PC-9 (cell line): ENCODE measurements at regions of chr10 and their contacts with region 1.

Region 1: DNA sequence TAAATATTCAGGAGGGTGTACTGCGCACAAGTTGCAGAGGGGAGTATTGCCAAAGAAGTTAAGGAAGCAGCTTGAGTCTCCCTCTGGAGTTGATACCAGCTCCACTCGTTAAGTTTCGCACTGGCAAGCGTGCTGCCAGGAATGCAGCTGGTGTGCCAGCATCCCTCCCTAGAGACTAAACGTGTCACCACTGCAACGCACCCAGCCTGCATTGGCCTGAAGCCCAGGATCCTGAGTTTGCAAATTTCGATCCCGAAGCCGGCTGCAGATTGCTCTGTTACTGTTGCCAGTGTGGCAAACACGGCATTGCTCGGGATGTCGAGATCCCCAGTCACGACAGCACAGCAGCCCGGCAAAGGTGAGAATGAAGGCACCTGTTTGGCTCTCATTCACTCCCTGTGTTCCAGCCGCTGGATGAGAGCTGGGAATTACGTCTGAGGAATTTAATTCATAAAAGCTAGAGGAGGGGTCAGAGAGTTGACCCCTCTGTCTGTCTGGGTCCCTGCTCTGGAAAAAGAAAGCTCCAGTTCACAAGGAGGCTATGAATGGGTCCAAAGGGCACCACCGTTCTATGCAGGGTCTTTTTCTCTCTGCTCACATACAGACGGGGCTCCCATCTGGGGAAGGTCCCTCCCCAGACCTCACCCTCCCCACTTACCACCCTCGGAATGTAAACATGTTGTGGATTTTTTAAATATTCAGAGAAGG is 61.0 kb downstream of the NRP1 start:
- DNase-seq: peak; percentile 94 to 95
- H3K4me3 ChIP-seq: peak overlapping the region; percentile 45; the same call in 1 of the 2 replicates
- H3K27ac ChIP-seq: peak overlapping the region; percentile 98
- H3K4me1 ChIP-seq: peaks cover 32% of the 10 kb centered on the region
- H3K27me3 ChIP-seq: no peaks in the 10 kb centered on the region
- CTCF ChIP-seq: no peak

Region 2: GRCh38 chr10:33134011-33134751 is 139.3 kb before region 1 on chr10:
- CTCF ChIA-PET with region 1: no interaction called
- POLR2A ChIA-PET with region 1: no interaction called
- intact Hi-C with region 1: loop called (anchors 10 kb)
- DNase-seq: peak; percentile 80 to 97
- H3K4me3 ChIP-seq: no peak overlapping the region
- H3K27ac ChIP-seq: peak overlapping the region; percentile 95
- H3K4me1 ChIP-seq: peaks cover 42% of the 10 kb centered on the region
- H3K27me3 ChIP-seq: no peaks in the 10 kb centered on the region
- CTCF ChIP-seq: no peak

Region 3: GRCh38 chr10:33216661-33217427 is 56.6 kb before region 1 on chr10:
- CTCF ChIA-PET with region 1: no interaction called
- POLR2A ChIA-PET with region 1: no interaction called
- intact Hi-C with region 1: loop called (anchors 1 kb)
- DNase-seq: peak; percentile 63 to 93
- H3K4me3 ChIP-seq: no peak overlapping the region; the same call in 1 of the 2 replicates
- H3K27ac ChIP-seq: peak overlapping the region; percentile 89
- H3K4me1 ChIP-seq: peaks cover 36% of the 10 kb centered on the region
- H3K27me3 ChIP-seq: no peaks in the 10 kb centered on the region
- CTCF ChIP-seq: no peak

Region 4: DNA sequence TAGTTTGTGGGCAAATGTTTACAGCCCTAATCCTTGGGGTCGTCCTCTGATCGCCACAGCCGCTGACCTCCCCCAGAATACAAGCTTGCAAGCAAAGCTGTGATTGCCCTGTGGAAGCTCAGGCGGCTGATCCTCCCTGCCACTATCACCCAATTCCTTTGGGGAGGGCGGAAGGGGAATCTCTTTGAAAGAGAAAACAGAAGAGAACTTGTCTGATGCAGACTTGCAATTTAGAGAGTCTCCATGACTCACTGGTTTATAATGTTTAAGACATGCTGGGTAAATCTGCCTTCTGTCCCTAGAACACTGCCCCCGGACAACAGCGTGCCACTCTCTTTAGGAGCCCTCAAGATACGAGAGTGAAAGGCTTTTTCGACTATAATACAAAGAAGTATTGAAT is 14.5 kb before region 1 on chr10:
- CTCF ChIA-PET with region 1: interaction called, 9 read pairs
- POLR2A ChIA-PET with region 1: interaction called, 5 read pairs
- intact Hi-C with region 1: loop called (anchors 1 kb)
- DNase-seq: no peak
- H3K4me3 ChIP-seq: no peak overlapping the region
- H3K27ac ChIP-seq: no peak overlapping the region
- H3K4me1 ChIP-seq: peaks cover 28% of the 10 kb centered on the region
- H3K27me3 ChIP-seq: no peaks in the 10 kb centered on the region
- CTCF ChIP-seq: no peak

Region 5: DNA sequence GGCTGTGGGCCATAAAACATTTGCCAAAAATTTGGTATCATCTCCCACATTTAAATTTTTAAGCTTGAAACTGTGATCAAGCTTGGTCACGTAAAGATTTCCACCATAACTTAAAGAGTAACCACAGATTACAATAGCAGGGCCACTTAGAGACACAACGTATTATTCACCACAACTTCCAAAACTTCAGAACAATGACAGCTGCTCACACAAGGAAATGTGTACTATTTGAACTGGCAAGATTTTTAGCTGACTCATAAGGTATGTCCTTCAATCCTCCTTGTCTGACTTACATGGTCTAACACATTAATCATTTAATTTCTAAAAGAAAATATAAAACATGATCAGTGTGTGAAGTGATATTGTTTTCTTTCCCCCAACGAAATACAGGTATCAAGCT is 1307.2 kb after region 1 on chr10:
- CTCF ChIA-PET with region 1: no interaction called
- POLR2A ChIA-PET with region 1: interaction called, 10 read pairs
- intact Hi-C with region 1: no loop called
- DNase-seq: peak; percentile 4 to 73
- H3K4me3 ChIP-seq: no peak overlapping the region
- H3K27ac ChIP-seq: peak overlapping the region; percentile 24; the same call in 1 of the 2 replicates
- H3K4me1 ChIP-seq: peaks cover 8% of the 10 kb centered on the region
- H3K27me3 ChIP-seq: no peaks in the 10 kb centered on the region
- CTCF ChIP-seq: no peak